Gastrocnemius medialis (tissue), 4 donors: ENCODE measurements at regions of chr1 and their contacts with region 1.

Region 1: DNA sequence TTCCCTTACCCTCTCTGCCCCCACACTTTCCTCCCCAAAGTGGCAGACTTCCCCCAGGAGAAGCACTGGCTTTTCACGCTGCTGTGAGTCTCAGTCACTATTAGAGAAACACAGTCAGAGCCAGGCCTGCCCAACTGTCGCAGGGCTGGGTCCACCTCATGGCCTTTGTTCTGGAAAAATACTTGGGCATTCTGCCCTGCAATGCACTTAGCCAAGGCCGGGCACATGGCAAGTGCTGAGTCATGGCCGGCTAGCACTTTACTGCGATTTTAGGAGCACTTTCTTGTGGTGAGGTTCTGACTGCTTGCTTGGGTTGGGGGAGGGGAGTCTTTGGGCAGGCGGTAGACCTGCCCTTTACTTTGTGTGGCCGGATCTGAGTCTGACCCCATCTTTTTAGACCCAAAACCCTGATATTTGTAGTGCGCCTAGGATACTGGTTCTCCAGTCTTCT is 7.7 kb downstream of the EPHX1 start:
- DNase-seq: peak; percentile 88 to 91
- ATAC-seq: peak; percentile 73 to 78
- H3K4me3 ChIP-seq: peak overlapping the region; percentile 1 to 22 (median 2)
- H3K27ac ChIP-seq: peak overlapping the region; percentile 94 to 97 (median 96)
- H3K4me1 ChIP-seq: peaks cover 82 to 96% of the 10 kb centered on the region in 2 donors
- H3K27me3 ChIP-seq: no peaks in the 10 kb centered on the region
- CTCF ChIP-seq: no peak
- POLR2A ChIP-seq: peak in 1 of 2 donors; percentile 27

Region 2: GRCh38 chr1:225834417-225835329 is 17.0 kb after region 1 on chr1:
- in situ Hi-C with region 1: no loop called
- intact Hi-C with region 1: loop called (anchors 2 kb)
- DNase-seq: peak; percentile 71 to 85
- ATAC-seq: peak; percentile 93 to 97
- H3K4me3 ChIP-seq: no peak overlapping the region
- H3K27ac ChIP-seq: peak overlapping the region; percentile 49 to 81 (median 72)
- H3K4me1 ChIP-seq: peaks cover 17 to 26% of the 10 kb centered on the region in 2 donors
- H3K27me3 ChIP-seq: no peaks in the 10 kb centered on the region
- CTCF ChIP-seq: no peak
- POLR2A ChIP-seq: no peak

Region 3: DNA sequence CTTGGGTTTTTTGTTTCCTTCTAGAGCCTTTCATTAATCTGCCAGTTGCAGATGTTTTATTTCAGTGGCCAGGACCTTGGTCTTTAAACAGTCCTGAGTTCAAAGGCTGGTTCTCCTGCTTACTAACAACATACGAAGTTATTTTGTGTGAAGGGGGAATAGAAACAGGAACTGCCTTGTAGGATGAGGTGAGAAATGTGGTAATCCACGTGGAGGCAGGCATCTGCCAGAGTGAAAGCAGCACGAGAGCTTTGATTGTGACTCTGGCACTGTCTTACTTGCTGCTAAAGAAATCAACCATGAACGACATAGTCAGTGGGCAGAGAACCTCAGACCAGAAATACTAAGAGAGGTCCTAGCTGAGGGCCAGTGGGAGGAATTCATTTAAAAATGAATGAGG is 34.2 kb after region 1 on chr1:
- in situ Hi-C with region 1: no loop called
- intact Hi-C with region 1: no loop called
- DNase-seq: no peak
- ATAC-seq: no peak
- H3K4me3 ChIP-seq: no peak overlapping the region
- H3K27ac ChIP-seq: no peak overlapping the region
- H3K4me1 ChIP-seq: peaks cover 0 to 3% of the 10 kb centered on the region in 2 donors
- H3K27me3 ChIP-seq: no peaks in the 10 kb centered on the region
- CTCF ChIP-seq: no peak
- POLR2A ChIP-seq: no peak